ENCODE measurements at regions of chr9 and their contacts with region 1.

Region 1: GRCh38 chr9:71001780-71002386 is 119.5 kb downstream of the TRPM3 start:
- ATAC-seq: no peak
- H3K4me3 ChIP-seq: no peak overlapping the region
- H3K27ac ChIP-seq: no peak overlapping the region
- H3K4me1 ChIP-seq: no peaks in the 10 kb centered on the region

Region 2: DNA sequence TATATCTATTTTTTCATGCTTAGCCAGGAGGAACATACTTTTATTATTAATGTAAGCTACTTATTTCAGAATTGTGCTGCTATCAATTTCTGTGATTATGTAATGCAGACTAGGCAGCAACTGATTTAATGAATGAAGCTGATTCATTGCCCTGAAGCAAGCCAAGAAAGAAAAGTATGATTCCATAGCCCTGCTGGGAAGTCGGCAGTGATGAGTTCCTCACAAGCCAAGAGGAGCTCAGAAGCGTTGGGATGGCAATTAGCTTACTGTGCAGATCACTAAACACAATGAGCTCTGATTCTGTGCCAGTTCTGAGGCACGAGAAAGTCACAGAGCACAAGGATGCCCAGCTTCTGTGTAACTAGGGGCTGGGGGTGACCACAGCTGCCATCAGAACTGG is 333.1 kb before region 1 on chr9:
- in situ Hi-C with region 1: loop called in 1 of 9 experiments (anchors 25 kb)
- ATAC-seq: peak in 3 of 8 experiments; percentile 66 to 94 (median 72)
- H3K4me3 ChIP-seq: no peak overlapping the region
- H3K27ac ChIP-seq: no peak overlapping the region
- H3K4me1 ChIP-seq: no peaks in the 10 kb centered on the region

Region 3: DNA sequence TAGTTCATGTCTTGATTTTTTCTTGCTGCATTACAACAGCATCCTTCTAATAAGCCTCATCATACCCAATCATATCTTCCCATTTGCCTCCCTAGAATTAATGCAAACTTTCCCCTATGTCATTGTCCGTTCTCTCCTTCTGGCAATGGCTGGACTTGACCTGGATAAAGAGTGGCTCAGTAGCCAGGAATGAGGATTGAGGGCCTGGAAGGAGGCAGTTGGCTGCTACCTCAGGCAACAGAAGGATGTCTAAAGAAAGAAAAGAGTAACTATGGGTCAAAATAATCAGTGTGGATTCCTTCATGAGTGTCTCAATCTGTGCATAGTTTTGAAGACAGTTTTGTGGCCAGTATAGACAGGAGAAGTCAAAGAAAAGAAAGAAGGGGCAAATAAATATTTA is 90.1 kb before region 1 on chr9:
- in situ Hi-C with region 1: no loop called
- ATAC-seq: no peak
- H3K4me3 ChIP-seq: no peak overlapping the region
- H3K27ac ChIP-seq: no peak overlapping the region
- H3K4me1 ChIP-seq: peaks cover 0 to 3% of the 10 kb centered on the region in 2 donors